ENCODE measurements at regions of chr2 and their contacts with region 1.

Region 1: GRCh38 chr2:187527262-187527661 is 27.0 kb downstream of the TFPI start:
- DNase-seq: peak; percentile 78
- ATAC-seq: peak; percentile 71
- H3K4me3 ChIP-seq: no peak overlapping the region; a peak in 1 of 6 replicates
- H3K27ac ChIP-seq: peak overlapping the region; percentile 60
- H3K4me1 ChIP-seq: peaks cover 89% of the 10 kb centered on the region
- H3K27me3 ChIP-seq: no peaks in the 10 kb centered on the region
- CTCF ChIP-seq: no peak
- EP300 ChIP-seq: peak in 1 of 2 experiments; percentile 75; a peak in 2 of 4 replicates
- POLR2A ChIP-seq: no peak
- RAD21 ChIP-seq: no peak

Region 2: GRCh38 chr2:187509667-187510417 is 17.4 kb before region 1 on chr2:
- CTCF ChIA-PET with region 1: no interaction called
- POLR2A ChIA-PET with region 1: interaction called, 20 read pairs
- in situ Hi-C with region 1: no loop called
- intact Hi-C with region 1: no loop called
- DNase-seq: peak; percentile 99
- ATAC-seq: peak; percentile 91
- H3K4me3 ChIP-seq: peak overlapping the region; percentile 9 to 70 (median 56); a peak in 4 of 6 replicates
- H3K27ac ChIP-seq: peak overlapping the region; percentile 75
- H3K4me1 ChIP-seq: peaks cover 90% of the 10 kb centered on the region
- H3K27me3 ChIP-seq: no peaks in the 10 kb centered on the region; a peak in 1 of 5 replicates
- CTCF ChIP-seq: no peak
- EP300 ChIP-seq: peak; percentile 28 to 99; a peak in 2 of 4 replicates
- POLR2A ChIP-seq: no peak; a peak in 1 of 4 replicates
- RAD21 ChIP-seq: no peak

Measured in HepG2 (cell line).